Activated CD8-positive, alpha-beta memory T cell treated with anti-CD3 and anti-CD28 coated beads, Interleukin-2, amount 10 ng/mL, durations not matched to agents 7 days and 5 days (primary cell): ENCODE measurements at regions of chr14 and their contacts with region 1.

Region 1: DNA sequence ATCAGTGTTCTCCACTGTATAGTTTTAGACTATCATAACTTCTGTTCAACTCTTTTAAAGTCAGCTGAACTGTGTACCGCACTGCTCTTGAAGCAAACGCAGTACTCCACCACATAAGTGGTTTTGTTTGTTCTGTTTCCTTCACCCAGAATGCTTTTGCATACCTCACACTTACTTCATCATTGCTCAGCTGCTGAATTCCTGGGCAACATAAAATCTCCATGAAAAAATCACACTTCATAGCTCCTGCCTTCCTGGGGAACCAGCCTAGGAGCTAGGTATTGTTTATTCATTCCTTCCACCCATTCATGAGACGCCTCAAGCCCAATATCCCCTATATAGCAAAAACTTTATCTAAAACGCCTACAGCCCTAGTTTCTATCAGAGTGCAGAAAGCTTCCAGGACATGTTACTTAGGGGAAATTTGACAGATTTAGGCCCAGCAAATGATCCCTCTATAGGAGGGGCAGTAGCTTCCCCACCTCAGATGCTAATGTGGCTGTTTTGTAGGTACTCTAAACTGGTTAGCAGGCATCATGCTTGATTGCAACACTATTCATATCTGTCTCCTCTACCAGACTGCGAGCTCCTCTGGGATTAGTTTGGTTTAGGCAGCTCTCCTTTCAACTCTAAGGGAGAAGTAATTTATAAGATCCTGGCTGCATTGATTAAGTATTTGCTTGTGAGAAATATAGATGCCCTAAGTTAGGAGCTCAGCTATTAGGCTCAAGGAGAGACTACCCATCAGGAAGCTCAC is 44.5 kb downstream of the LRRC9 start:
- DNase-seq: no peak
- ATAC-seq: peak; percentile 35
- H3K4me3 Mint-ChIP-seq: peak overlapping the region; percentile 72
- H3K27ac Mint-ChIP-seq: peak overlapping the region; percentile 48
- H3K4me1 Mint-ChIP-seq: peaks cover 17% of the 10 kb centered on the region
- H3K27me3 Mint-ChIP-seq: peaks cover 8% of the 10 kb centered on the region

Region 2: DNA sequence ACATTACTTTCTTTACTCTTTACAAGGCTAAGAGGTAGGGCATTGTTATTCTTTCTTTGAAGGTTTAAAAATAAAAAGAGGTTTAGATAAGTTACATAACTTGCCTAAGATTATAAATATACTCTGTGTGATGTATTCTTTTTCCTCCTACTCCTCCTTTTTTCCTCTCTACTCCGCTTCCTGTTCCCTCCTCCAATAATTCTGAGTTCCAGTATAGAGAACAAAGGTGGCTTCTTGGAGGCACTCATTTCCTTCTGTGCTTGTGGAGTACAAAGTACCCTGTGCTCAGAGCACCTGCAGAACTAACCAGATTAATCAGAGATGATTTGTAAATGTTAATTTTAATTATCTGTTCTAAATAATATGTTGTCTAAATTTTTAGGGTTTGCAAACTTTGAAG is 33.2 kb before region 1 on chr14:
- CTCF ChIA-PET with region 1: no interaction called
- DNase-seq: no peak
- ATAC-seq: no peak
- H3K4me3 Mint-ChIP-seq: no peak overlapping the region
- H3K27ac Mint-ChIP-seq: no peak overlapping the region
- H3K4me1 Mint-ChIP-seq: no peaks in the 10 kb centered on the region
- H3K27me3 Mint-ChIP-seq: peaks cover 9% of the 10 kb centered on the region

Region 3: DNA sequence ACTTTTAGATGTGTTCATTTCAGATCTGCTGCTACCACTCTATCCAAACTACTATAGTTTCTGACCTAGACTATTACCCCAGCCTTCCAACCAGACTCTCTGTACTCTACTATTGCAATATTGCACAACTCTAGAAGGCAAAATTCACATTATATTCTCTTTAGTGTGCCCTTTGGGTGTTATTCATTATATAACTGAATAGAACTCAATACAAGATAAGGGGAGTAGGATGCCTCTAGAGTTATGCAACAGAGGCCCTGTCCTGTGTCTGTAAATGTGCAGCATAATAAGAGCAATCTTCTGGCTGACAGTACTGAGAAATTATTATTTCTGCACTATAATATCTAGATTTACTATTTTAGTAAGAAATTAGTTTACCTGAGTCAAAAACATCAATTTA is 18.6 kb after region 1 on chr14:
- CTCF ChIA-PET with region 1: interaction called, 14 read pairs
- DNase-seq: no peak
- ATAC-seq: no peak
- H3K4me3 Mint-ChIP-seq: no peak overlapping the region
- H3K27ac Mint-ChIP-seq: no peak overlapping the region
- H3K4me1 Mint-ChIP-seq: no peaks in the 10 kb centered on the region
- H3K27me3 Mint-ChIP-seq: peaks cover 2% of the 10 kb centered on the region

Region 4: DNA sequence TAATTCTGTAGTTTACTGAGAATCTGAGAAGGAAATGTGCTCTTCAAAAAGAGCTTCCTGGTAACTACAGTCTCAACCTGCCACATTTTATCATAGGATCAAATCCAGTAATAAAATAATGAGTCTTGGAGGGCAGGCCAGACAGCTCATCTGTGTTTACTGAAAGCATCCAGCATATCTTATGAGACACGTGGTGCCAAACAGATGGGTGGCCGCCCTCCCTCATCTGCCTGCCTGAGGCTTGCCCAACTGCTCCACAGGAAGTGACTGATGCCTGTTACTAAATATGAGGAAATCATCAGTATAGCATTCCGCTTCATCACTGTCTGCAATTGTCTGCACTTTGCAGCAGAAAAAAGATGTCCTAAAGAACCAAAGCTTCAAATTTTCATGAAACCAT is 187.3 kb after region 1 on chr14:
- CTCF ChIA-PET with region 1: interaction called, 10 read pairs
- DNase-seq: peak; percentile 83
- ATAC-seq: peak; percentile 98
- H3K4me3 Mint-ChIP-seq: no peak overlapping the region
- H3K27ac Mint-ChIP-seq: peak overlapping the region; percentile 75
- H3K4me1 Mint-ChIP-seq: peaks cover 34% of the 10 kb centered on the region
- H3K27me3 Mint-ChIP-seq: no peaks in the 10 kb centered on the region

Region 5: GRCh38 chr14:60175246-60175902 is 210.9 kb after region 1 on chr14:
- CTCF ChIA-PET with region 1: no interaction called
- DNase-seq: no peak
- ATAC-seq: no peak
- H3K4me3 Mint-ChIP-seq: no peak overlapping the region
- H3K27ac Mint-ChIP-seq: no peak overlapping the region
- H3K4me1 Mint-ChIP-seq: peaks cover 3% of the 10 kb centered on the region
- H3K27me3 Mint-ChIP-seq: peaks cover 7% of the 10 kb centered on the region